ENCODE measurements at regions of chr12 and their contacts with region 1.

Region 1: GRCh38 chr12:22624870-22625761 is at the start of gene ETNK1:
- DNase-seq: peak; percentile 86
- ATAC-seq: peak; percentile 87
- H3K4me3 ChIP-seq: peak within 1 kb of the TSS; percentile 90
- H3K27ac ChIP-seq: peak within 1 kb of the TSS; percentile 84
- H3K4me1 ChIP-seq: peaks cover 16% of the 10 kb centered on the region
- H3K27me3 ChIP-seq: no peaks in the 10 kb centered on the region
- CTCF ChIP-seq: no peak
- total RNA-seq, gene ETNK1: 17.8 and 22.2 TPM in 2 replicates

Region 2: GRCh38 chr12:22204391-22204790 is 420.7 kb before region 1 on chr12:
- CTCF ChIA-PET with region 1: no interaction called
- POLR2A ChIA-PET with region 1: no interaction called
- intact Hi-C with region 1: no loop called
- DNase-seq: no peak
- ATAC-seq: no peak
- H3K4me3 ChIP-seq: no peak overlapping the region
- H3K27ac ChIP-seq: no peak overlapping the region
- H3K4me1 ChIP-seq: no peaks in the 10 kb centered on the region
- H3K27me3 ChIP-seq: peaks cover 12% of the 10 kb centered on the region; the same call in 1 of the 2 replicates
- CTCF ChIP-seq: no peak

Region 3: DNA sequence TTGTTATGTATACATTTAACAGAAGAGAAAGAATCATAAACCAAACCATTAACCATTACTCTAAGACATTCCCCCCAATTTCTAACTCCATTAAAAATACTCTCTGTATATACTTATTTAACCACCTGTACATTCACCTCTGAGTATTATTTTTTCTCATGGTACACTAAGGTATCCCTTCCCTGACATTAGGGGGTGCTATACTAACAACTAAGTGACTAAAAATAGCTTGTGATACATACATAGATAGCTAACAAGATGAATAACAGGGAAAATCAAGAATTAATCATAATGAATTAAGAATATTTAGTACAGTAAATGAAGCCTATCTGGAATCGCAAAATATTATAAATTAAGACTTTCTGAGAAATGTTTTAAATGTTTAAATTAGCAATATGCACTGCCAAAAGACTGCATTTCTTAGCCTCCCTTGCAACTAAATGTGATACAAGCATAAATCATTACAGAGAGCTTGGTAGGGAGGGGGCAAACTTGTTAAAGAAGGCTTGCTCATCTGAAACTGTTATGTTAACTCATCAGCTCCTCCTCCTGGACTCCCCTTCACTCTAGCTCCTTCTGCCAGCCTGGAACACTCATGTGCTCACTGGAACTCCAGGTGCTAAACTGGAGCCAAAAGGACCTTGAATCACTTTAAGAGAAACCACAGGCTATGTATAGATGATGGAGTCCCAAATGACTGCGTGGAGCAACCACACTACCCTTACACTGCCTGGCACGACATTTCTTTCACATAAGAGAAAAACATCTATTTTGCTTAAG is 95.6 kb before region 1 on chr12:
- CTCF ChIA-PET with region 1: interaction called, 7 read pairs
- POLR2A ChIA-PET with region 1: no interaction called
- intact Hi-C with region 1: loop called (anchors 5 kb)
- DNase-seq: peak; percentile 55
- ATAC-seq: peak; percentile 61
- H3K4me3 ChIP-seq: no peak overlapping the region
- H3K27ac ChIP-seq: no peak overlapping the region
- H3K4me1 ChIP-seq: peaks cover 29% of the 10 kb centered on the region
- H3K27me3 ChIP-seq: no peaks in the 10 kb centered on the region
- CTCF ChIP-seq: peak; percentile 70

Region 4: GRCh38 chr12:22544038-22544979 is 80.8 kb before region 1 on chr12 and contains the start of gene C2CD5:
- CTCF ChIA-PET with region 1: interaction called, 3 read pairs
- POLR2A ChIA-PET with region 1: interaction called, 4 read pairs
- intact Hi-C with region 1: loop called (anchors 1 kb)
- DNase-seq: peak; percentile 91
- ATAC-seq: peak; percentile 88
- H3K4me3 ChIP-seq: peak within 1 kb of the TSS; percentile 88
- H3K27ac ChIP-seq: peak within 1 kb of the TSS; percentile 80
- H3K4me1 ChIP-seq: peaks cover 9% of the 10 kb centered on the region; the same call in 1 of the 2 replicates
- H3K27me3 ChIP-seq: no peaks in the 10 kb centered on the region
- CTCF ChIP-seq: 0 out of 2 replicates have a peak, but pooled peaks have one; percentile 17
- total RNA-seq, gene C2CD5: 12.7 and 14.4 TPM in 2 replicates

Region 5: GRCh38 chr12:22588817-22589216 is 36.3 kb before region 1 on chr12:
- CTCF ChIA-PET with region 1: no interaction called
- POLR2A ChIA-PET with region 1: no interaction called
- intact Hi-C with region 1: loop called (anchors 5 kb)
- DNase-seq: no peak
- ATAC-seq: no peak
- H3K4me3 ChIP-seq: no peak overlapping the region
- H3K27ac ChIP-seq: no peak overlapping the region
- H3K4me1 ChIP-seq: peaks cover 3% of the 10 kb centered on the region; the same call in 1 of the 2 replicates
- H3K27me3 ChIP-seq: no peaks in the 10 kb centered on the region
- CTCF ChIP-seq: no peak